SK-N-SH (cell line): ENCODE measurements at regions of chr4 and their contacts with region 1.

Region 1: GRCh38 chr4:3880615-3881120 is 114.5 kb downstream of the ADRA2C start:
- DNase-seq: peak; percentile 89
- H3K4me3 ChIP-seq: no peak overlapping the region; a peak in 1 of 4 replicates
- H3K27ac ChIP-seq: no peak overlapping the region
- H3K4me1 ChIP-seq: peaks cover 0 to 4% of the 10 kb centered on the region in 2 experiments; a peak in 1 of 4 replicates
- H3K27me3 ChIP-seq: peaks cover 10% of the 10 kb centered on the region; the same call in 1 of the 2 replicates
- CTCF ChIP-seq: peak; percentile 68
- EP300 ChIP-seq: no peak
- RAD21 ChIP-seq: peak; percentile 87

Region 2: GRCh38 chr4:2080429-2081300 is 1800.0 kb before region 1 on chr4:
- CTCF ChIA-PET with region 1: no interaction called
- POLR2A ChIA-PET with region 1: no interaction called
- DNase-seq: no peak
- H3K4me3 ChIP-seq: no peak overlapping the region
- H3K27ac ChIP-seq: no peak overlapping the region
- H3K4me1 ChIP-seq: no peaks in the 10 kb centered on the region
- H3K27me3 ChIP-seq: no peaks in the 10 kb centered on the region
- CTCF ChIP-seq: no peak
- EP300 ChIP-seq: no peak
- RAD21 ChIP-seq: no peak

Region 3: DNA sequence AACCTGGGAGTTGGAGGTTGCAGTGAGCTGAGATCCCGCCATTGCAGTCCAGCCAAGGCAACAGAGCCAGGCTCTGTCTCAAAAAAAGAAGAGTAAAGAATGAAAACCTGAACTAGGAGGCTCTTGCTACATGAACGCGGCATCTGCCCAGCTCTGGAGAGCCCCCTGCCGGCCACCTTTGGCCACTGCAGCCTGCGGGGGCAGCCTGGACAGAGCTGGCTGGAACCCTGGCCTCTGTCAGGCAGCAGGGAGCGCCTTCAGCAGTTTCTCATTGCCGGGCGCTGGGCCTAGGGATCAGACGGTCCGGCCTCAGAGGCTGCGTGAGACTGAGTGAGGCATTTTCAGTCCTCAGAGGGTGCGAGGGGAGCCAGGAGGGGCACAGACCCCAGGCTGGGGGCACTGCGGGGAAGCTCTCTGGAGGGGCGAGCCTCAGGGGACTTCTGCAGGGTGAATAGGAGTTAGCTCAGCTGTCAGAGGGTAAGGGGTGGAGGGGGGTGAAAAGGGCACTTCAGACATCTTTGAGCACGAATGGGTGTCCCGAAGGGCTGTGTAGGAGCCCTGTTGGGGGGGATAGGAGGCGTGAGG is 400.0 kb before region 1 on chr4:
- CTCF ChIA-PET with region 1: interaction called, 14 read pairs
- POLR2A ChIA-PET with region 1: no interaction called
- DNase-seq: peak; percentile 92
- H3K4me3 ChIP-seq: peak overlapping the region in 1 of 2 experiments; percentile 57; a peak in 1 of 4 replicates
- H3K27ac ChIP-seq: no peak overlapping the region
- H3K4me1 ChIP-seq: peaks cover 0 to 19% of the 10 kb centered on the region in 2 experiments; a peak in 1 of 4 replicates
- H3K27me3 ChIP-seq: no peaks in the 10 kb centered on the region
- CTCF ChIP-seq: peak; percentile 97
- EP300 ChIP-seq: no peak
- RAD21 ChIP-seq: peak; percentile 79

Region 4: DNA sequence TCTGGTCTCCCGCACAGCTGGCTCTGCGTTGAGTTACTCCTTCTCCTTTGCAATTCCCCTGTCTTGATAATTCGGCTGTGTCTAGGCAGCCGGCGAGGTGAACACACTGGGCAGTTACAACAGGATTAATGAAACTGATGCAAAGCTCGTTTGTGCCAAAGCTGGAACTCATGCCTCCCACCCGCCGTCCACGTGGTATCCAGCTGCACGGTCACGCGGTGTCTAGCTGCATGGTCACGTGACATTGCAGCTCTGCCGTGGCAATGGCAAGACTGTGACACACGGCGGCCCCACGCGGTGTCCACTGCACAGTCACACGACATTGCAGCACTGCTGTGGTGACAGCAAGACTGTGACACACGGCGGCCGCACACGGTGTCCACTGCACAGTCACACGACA is 317.3 kb before region 1 on chr4:
- CTCF ChIA-PET with region 1: no interaction called
- POLR2A ChIA-PET with region 1: no interaction called
- DNase-seq: no peak
- H3K4me3 ChIP-seq: no peak overlapping the region
- H3K27ac ChIP-seq: no peak overlapping the region
- H3K4me1 ChIP-seq: peaks cover 0 to 9% of the 10 kb centered on the region in 2 experiments; a peak in 1 of 4 replicates
- H3K27me3 ChIP-seq: no peaks in the 10 kb centered on the region
- CTCF ChIP-seq: no peak
- EP300 ChIP-seq: no peak
- RAD21 ChIP-seq: no peak

Region 5: GRCh38 chr4:3729188-3729875 is 151.3 kb before region 1 on chr4:
- CTCF ChIA-PET with region 1: no interaction called
- POLR2A ChIA-PET with region 1: no interaction called
- DNase-seq: no peak
- H3K4me3 ChIP-seq: no peak overlapping the region
- H3K27ac ChIP-seq: no peak overlapping the region
- H3K4me1 ChIP-seq: peaks cover 0 to 16% of the 10 kb centered on the region in 2 experiments; a peak in 1 of 4 replicates
- H3K27me3 ChIP-seq: no peaks in the 10 kb centered on the region
- CTCF ChIP-seq: no peak
- EP300 ChIP-seq: no peak
- RAD21 ChIP-seq: no peak

Region 6: DNA sequence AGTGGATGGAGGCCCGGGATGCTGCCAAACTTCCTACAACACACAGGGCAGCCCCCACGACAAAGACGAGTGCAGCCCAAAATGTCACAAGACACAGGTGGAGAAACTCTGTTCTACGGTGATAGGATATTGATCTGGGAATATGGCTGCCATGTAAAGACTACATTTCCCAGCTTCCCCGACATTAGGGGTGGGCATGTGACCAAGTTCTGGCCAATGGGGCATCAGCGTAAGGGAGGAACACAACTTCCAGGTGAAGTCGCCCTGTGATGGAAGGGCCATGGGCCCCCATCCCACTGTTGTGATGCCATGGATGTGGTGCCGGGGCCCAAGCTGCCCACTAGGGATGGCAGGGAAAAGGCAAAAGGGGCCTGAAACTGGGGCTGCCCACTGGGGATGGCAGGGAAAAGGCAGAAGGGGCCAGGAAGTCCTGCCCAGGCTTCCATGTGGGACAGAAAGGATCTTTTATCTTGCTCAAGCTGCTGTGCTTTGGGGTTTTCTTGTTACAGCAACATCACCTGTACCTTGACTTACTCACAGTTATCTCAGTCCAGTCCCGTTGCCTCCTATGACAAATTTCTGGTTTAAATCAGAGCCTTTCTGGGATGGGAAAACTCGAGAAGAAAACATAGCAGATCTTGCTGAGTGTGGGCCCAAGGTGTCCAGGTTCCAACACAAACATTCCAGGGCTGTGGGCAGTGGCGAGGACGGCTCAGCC is 124.2 kb before region 1 on chr4:
- CTCF ChIA-PET with region 1: interaction called, 17 read pairs
- POLR2A ChIA-PET with region 1: no interaction called
- DNase-seq: peak; percentile 68
- H3K4me3 ChIP-seq: no peak overlapping the region
- H3K27ac ChIP-seq: no peak overlapping the region
- H3K4me1 ChIP-seq: no peaks in the 10 kb centered on the region; a peak in 1 of 4 replicates
- H3K27me3 ChIP-seq: no peaks in the 10 kb centered on the region
- CTCF ChIP-seq: no peak
- EP300 ChIP-seq: no peak
- RAD21 ChIP-seq: no peak

Region 7: DNA sequence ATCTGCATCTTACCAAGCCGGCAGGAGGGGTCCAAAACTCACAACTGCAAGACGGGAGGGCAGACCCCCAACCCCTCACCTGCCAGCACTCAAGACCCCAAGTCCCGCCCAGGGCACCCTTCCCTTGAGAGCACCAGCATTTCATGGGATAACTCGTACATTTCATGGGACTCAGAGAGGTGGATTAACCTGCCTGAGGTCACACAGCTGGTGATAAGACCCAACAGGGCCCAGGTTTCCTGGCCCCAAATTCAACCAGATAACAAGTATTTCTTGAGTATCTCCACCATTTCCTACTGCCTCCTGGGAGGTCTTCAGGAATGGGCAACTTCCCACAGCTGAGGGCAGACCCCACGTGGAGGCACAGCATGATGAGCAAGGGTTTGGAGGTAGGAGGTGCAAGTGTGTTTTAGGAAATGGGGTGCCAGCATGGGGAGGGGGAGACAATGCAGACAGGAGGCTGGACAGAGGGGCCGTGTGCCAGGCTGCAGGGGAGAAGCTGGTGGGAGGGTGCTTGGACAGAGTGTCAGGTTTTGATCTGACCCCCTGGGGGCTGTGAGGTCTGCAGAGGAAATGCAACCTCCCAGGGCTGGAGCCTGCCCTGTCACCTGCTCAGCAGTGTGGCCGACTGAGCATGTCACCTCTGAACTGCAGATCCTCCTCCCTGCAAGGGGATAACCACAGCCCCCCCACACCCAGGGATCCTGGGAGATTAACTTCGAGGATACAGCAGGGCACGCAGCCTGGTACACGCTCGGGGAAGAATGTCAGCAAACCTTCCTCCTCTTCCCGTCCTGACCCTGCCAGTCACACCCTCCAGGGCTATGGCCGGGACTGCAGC is 110.1 kb before region 1 on chr4:
- CTCF ChIA-PET with region 1: interaction called, 159 read pairs
- POLR2A ChIA-PET with region 1: interaction called, 5 read pairs
- DNase-seq: no peak
- H3K4me3 ChIP-seq: no peak overlapping the region
- H3K27ac ChIP-seq: no peak overlapping the region
- H3K4me1 ChIP-seq: peaks cover 0 to 17% of the 10 kb centered on the region in 2 experiments; a peak in 1 of 4 replicates
- H3K27me3 ChIP-seq: no peaks in the 10 kb centered on the region
- CTCF ChIP-seq: no peak
- EP300 ChIP-seq: no peak
- RAD21 ChIP-seq: no peak

Region 8: DNA sequence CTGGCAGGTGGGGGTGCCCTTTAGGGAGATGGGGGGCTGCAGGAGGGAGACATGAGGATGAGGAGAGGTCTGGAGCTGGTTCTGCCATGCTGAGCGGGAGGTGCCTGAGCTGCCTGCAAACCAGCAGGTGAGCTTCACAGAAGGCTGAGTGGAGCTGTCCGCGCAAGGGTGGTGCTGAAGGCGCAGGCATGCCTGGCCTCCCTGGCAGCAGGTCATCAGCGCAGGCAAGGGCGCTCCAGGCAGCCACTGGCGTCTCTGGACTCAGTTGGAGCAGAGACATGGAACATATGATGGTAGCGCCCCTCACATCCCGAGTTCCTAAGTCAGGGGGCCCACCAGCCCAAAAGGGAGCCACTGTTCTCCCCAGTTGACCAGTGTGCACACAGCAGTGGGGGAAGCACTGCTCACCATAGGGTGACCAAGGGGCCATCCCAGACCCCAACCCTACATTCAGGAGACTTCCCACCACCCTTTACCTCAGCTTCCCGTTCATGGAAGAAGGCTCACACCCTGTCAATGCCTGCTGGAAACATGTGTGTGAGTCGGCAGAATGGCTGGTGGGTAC is 88.6 kb before region 1 on chr4:
- CTCF ChIA-PET with region 1: interaction called, 144 read pairs
- POLR2A ChIA-PET with region 1: no interaction called
- DNase-seq: no peak
- H3K4me3 ChIP-seq: no peak overlapping the region
- H3K27ac ChIP-seq: no peak overlapping the region
- H3K4me1 ChIP-seq: peaks cover 0 to 33% of the 10 kb centered on the region in 2 experiments; a peak in 1 of 4 replicates
- H3K27me3 ChIP-seq: no peaks in the 10 kb centered on the region
- CTCF ChIP-seq: no peak
- EP300 ChIP-seq: no peak
- RAD21 ChIP-seq: no peak

Region 9: GRCh38 chr4:3860076-3860930 is 20.4 kb before region 1 on chr4:
- CTCF ChIA-PET with region 1: interaction called, 12 read pairs
- POLR2A ChIA-PET with region 1: no interaction called
- DNase-seq: no peak
- H3K4me3 ChIP-seq: no peak overlapping the region
- H3K27ac ChIP-seq: no peak overlapping the region
- H3K4me1 ChIP-seq: peaks cover 0 to 8% of the 10 kb centered on the region in 2 experiments; a peak in 1 of 4 replicates
- H3K27me3 ChIP-seq: no peaks in the 10 kb centered on the region
- CTCF ChIP-seq: no peak
- EP300 ChIP-seq: no peak
- RAD21 ChIP-seq: no peak

Region 10: DNA sequence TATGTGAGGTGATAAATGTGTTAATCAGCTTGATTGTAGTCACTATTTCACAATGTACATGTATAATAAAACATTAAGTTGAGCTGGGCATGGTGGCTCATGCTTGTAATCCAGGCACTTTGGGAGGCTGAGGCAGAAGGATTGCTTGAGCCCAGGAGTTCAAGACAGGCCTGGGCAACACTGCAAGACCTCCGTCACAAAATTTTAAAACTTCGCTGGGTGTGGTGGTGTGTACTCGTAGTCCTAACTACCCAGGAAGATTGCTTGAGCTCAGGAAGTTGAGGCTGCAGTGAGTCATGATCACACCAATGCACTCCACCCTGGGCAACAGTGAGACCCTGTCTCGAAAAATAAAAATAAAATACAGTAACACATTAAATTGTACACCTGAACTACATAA is 389.2 kb after region 1 on chr4:
- CTCF ChIA-PET with region 1: no interaction called
- POLR2A ChIA-PET with region 1: no interaction called
- DNase-seq: no peak
- H3K4me3 ChIP-seq: no peak overlapping the region
- H3K27ac ChIP-seq: no peak overlapping the region
- H3K4me1 ChIP-seq: no peaks in the 10 kb centered on the region
- H3K27me3 ChIP-seq: no peaks in the 10 kb centered on the region
- CTCF ChIP-seq: no peak
- EP300 ChIP-seq: no peak
- RAD21 ChIP-seq: no peak